ENCODE measurements at regions of chr15 and their contacts with region 1.

Region 1: GRCh38 chr15:71743861-71744382 is 66.4 kb upstream of the NR2E3 start:
- DNase-seq: peak in 1 of 2 experiments; percentile 60
- H3K4me3 ChIP-seq: no peak overlapping the region
- H3K27ac ChIP-seq: no peak overlapping the region
- H3K4me1 ChIP-seq: no peaks in the 10 kb centered on the region
- H3K27me3 ChIP-seq: no peaks in the 10 kb centered on the region
- CTCF ChIP-seq: peak in 2 of 3 experiments; percentile 60 to 62; a peak in 3 of 4 replicates
- EP300 ChIP-seq: no peak
- POLR2A ChIP-seq: no peak
- RAD21 ChIP-seq: peak; percentile 48 to 61

Region 2: DNA sequence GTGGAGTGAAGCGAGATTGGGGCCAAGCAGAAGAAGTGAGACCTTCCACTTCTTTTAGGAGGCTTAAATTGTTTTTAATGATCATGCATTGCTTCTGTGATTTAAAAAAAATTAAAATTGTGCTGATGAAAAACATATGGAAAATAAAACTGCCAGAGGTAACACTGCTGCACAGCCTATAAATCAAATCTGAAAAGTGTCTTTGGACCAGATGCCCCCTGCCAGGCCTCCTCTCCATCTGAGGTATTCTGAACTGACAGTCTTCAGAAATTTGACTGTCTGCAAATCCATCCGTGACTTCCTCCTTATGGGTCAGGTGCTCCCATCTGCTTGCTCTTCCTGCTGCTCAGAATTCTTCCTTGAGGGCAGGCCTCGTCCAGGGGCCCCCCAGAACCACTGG is 42.1 kb before region 1 on chr15:
- CTCF ChIA-PET with region 1: no interaction called
- POLR2A ChIA-PET with region 1: no interaction called
- DNase-seq: no peak
- H3K4me3 ChIP-seq: no peak overlapping the region
- H3K27ac ChIP-seq: no peak overlapping the region
- H3K4me1 ChIP-seq: no peaks in the 10 kb centered on the region; a peak in 2 of 7 replicates
- H3K27me3 ChIP-seq: no peaks in the 10 kb centered on the region; a peak in 1 of 7 replicates
- CTCF ChIP-seq: no peak
- EP300 ChIP-seq: no peak
- POLR2A ChIP-seq: no peak
- RAD21 ChIP-seq: no peak

Region 3: DNA sequence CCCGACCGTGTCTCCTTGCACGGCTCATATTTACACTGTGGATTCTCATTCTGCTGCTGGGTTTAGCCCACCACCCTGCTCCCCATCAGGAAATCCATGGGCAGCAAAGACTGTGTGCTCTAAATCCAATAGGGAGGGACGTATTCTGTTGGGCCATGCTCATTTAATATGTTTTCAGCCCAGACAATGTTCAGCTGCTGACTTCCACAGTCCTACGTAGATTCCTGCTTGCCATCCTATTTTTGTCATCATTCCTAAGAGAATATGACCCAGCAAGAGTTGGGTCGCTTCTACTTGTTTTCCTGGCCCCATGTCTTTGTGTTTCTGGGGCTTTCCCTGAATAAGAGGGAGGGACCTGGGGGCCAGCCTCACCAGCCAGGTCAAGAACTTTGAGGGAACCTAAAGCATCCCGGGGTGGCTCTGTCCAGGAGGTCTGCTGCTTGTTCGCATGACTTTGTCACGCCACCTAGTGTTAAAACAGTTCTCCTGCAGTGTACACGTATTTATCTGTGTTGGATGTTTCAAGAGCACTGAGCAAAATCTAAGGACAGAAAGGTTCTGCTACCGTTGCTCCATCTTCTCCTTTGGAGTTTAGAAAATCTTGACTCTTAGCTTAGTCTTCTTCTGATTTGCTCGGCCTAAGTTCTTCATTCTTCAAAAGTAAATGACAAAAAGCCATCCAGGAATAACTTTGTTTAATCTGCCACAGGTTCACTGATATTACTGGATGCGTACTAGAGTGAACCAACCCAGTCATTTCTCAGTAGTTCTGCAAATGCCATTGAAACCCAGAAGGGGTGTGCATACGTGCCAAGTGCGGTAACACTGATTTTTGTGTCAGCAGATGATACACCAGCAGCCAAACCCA is 13.4 kb before region 1 on chr15:
- CTCF ChIA-PET with region 1: interaction called, 25 read pairs
- POLR2A ChIA-PET with region 1: no interaction called
- DNase-seq: peak in 1 of 2 experiments; percentile 54
- H3K4me3 ChIP-seq: no peak overlapping the region
- H3K27ac ChIP-seq: no peak overlapping the region
- H3K4me1 ChIP-seq: no peaks in the 10 kb centered on the region
- H3K27me3 ChIP-seq: no peaks in the 10 kb centered on the region
- CTCF ChIP-seq: peak; percentile 48 to 83 (median 71)
- EP300 ChIP-seq: no peak
- POLR2A ChIP-seq: no peak
- RAD21 ChIP-seq: peak; percentile 70 to 74

Region 4: DNA sequence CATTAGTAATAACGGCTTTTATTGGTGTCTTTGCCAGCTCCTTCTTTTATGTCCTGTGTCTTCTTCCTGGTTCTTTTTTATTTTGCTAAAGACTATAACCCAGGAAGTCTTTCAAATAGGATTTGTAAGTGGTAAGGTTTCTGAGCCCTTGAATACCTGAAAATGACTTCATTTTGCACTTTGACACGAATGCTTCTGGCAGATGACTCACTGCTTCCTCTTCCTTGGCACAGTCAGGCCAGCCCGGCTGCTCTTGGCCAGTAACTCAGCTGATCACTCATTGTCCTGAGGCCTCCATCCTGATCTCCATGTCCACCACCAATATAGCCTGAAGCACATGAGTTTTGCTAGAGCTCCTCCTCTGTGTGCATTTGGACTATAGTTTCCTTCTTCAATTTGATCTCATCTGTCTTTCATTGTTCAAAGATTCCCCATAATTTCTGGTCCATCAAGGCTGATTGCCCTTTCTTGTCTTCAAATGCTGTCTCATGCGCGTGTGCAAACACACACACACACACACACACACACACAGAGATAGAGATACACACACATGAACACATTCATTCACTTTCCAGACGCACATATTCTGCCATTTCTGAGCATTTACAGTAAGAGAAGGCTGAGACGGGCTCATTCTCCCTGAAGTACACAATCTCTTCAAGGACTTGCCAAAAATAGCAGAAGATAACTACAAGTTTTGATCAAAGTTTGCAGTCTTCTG is 17.9 kb after region 1 on chr15:
- CTCF ChIA-PET with region 1: interaction called, 10 read pairs
- POLR2A ChIA-PET with region 1: no interaction called
- DNase-seq: no peak
- H3K4me3 ChIP-seq: no peak overlapping the region
- H3K27ac ChIP-seq: no peak overlapping the region
- H3K4me1 ChIP-seq: no peaks in the 10 kb centered on the region
- H3K27me3 ChIP-seq: no peaks in the 10 kb centered on the region
- CTCF ChIP-seq: no peak
- EP300 ChIP-seq: no peak
- POLR2A ChIP-seq: no peak
- RAD21 ChIP-seq: no peak

Region 5: DNA sequence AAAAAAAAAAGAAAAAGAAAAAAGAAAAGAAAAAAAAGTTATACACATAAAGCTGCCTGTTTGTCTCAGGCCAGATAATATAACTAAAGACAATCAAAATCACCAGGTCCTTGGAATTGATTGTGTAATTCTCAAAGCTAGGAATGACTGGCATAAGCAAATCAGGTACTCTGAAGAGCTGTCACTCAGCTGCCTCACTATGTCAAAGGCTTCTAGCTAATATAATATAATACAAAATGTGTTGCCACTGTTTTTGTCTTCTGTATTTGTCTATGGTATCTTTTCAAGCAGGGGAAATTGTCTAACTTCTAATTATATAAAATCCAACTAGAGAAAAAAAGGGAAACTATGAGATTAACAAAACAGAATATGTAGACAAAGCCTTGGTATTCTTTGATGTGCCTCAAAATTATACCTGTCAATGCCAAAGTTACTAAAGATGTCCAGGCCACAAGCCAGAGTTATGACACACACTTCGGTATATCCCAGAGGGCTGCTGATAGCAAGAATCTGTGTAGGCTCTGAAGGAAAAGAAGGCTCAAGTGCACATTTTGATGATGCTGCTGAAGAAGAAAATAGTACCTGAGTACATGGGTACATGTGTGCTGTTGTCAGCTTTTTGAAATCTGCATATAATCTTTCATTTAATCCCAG is 29.4 kb after region 1 on chr15:
- CTCF ChIA-PET with region 1: interaction called, 15 read pairs
- POLR2A ChIA-PET with region 1: no interaction called
- DNase-seq: no peak
- H3K4me3 ChIP-seq: no peak overlapping the region
- H3K27ac ChIP-seq: no peak overlapping the region
- H3K4me1 ChIP-seq: no peaks in the 10 kb centered on the region; a peak in 1 of 7 replicates
- H3K27me3 ChIP-seq: no peaks in the 10 kb centered on the region
- CTCF ChIP-seq: no peak
- EP300 ChIP-seq: no peak
- POLR2A ChIP-seq: no peak
- RAD21 ChIP-seq: no peak

Measured in H1 (cell line).